Right cardiac atrium (tissue), 5 donors: ENCODE measurements at regions of chr13 and their contacts with region 1.

Region 1: DNA sequence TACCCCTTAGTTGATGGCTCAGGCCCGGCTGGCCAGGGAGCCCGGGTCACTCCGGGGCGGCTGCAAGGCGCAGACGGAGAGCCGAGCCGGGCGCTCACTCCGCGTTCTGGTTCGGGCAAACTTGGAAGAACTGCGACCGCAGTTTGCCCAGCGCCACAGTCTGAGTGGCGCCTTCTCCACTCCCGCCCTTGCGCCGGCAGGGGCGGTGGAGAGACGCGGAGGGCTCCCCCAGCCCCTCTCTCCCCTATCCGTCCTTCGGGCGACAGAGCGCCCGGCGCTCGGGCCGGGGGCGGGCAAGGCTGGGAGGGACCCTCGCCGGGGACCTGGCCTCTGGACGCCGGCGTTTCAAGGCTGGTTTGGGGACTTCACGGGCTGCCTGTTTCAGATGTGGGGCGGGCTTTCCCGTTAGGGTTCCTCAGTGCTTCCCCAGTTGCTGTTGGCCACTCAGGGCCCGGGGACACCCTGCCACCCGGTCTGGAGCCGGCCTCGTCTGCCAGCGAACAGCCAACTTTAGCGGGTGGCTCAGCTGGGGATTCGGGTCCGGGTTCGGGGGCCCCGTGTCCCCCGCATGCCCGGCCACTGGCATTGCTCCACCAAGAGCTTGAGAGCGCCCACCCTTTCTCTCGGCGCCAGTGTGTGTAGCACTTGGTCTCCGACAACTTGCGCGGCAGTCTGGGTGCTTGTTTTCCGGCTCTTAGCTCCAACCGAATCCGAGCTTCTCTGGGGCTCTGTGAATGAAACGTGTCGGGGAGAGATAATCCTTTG is 1.5 kb downstream of the GPC6 start:
- DNase-seq: peak; percentile 65 to 86 (median 81)
- ATAC-seq: peak; percentile 90 to 92
- H3K4me3 ChIP-seq: peak overlapping the region; percentile 46
- H3K27ac ChIP-seq: peak overlapping the region; percentile 73
- H3K4me1 ChIP-seq: no peaks in the 10 kb centered on the region
- H3K27me3 ChIP-seq: no peaks in the 10 kb centered on the region

Region 2: GRCh38 chr13:92682832-92683517 is 545.1 kb before region 1 on chr13:
- intact Hi-C with region 1: loop called in 1 of 4 experiments (anchors 10 kb)
- DNase-seq: peak; percentile 27 to 62 (median 33)
- ATAC-seq: peak; percentile 97 to 99
- H3K4me3 ChIP-seq: no peak overlapping the region
- H3K27ac ChIP-seq: no peak overlapping the region
- H3K4me1 ChIP-seq: peaks cover 2% of the 10 kb centered on the region
- H3K27me3 ChIP-seq: no peaks in the 10 kb centered on the region

Region 3: GRCh38 chr13:92807966-92808365 is 420.1 kb before region 1 on chr13:
- intact Hi-C with region 1: no loop called
- DNase-seq: no peak
- ATAC-seq: no peak
- H3K4me3 ChIP-seq: no peak overlapping the region
- H3K27ac ChIP-seq: no peak overlapping the region
- H3K4me1 ChIP-seq: no peaks in the 10 kb centered on the region
- H3K27me3 ChIP-seq: no peaks in the 10 kb centered on the region

Region 4: GRCh38 chr13:93004919-93005318 is 223.1 kb before region 1 on chr13:
- intact Hi-C with region 1: no loop called
- DNase-seq: no peak
- ATAC-seq: no peak
- H3K4me3 ChIP-seq: no peak overlapping the region
- H3K27ac ChIP-seq: no peak overlapping the region
- H3K4me1 ChIP-seq: no peaks in the 10 kb centered on the region
- H3K27me3 ChIP-seq: no peaks in the 10 kb centered on the region